Panc1 (cell line): ENCODE measurements at regions of chr5 and their contacts with region 1.

Region 1: GRCh38 chr5:142324871-142325724 is at the start of gene SPRY4:
- DNase-seq: peak; percentile 96
- ATAC-seq: peak; percentile 64
- H3K4me3 ChIP-seq: peak within 1 kb of the TSS; percentile 83 to 96
- H3K27ac ChIP-seq: peak within 1 kb of the TSS; percentile 97
- H3K4me1 ChIP-seq: peaks cover 44% of the 10 kb centered on the region
- H3K27me3 ChIP-seq: no peaks in the 10 kb centered on the region
- CTCF ChIP-seq: peak; percentile 28; the same call in 1 of the 2 replicates
- total RNA-seq, gene SPRY4: 35.6 TPM

Region 2: DNA sequence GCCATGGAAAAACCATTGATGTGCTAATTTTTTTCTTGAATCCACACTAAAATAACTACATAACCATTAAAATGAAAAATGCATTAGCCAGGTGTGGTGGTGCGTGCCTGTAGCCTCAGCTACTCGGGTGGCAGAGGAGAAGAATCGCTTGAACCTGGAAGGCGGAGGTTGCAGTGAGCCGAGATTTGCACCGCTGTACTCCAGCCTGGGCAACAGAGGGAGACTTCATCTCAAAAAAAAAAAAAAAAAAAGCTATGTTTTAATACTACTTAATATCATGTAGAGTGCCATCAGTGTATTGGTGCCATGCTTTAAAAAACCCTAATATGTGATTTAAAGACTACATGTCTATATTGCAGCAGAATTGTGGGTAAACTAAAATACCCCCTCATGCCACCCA is 157.6 kb before region 1 on chr5:
- CTCF ChIA-PET with region 1: no interaction called
- POLR2A ChIA-PET with region 1: no interaction called
- in situ Hi-C with region 1: no loop called
- intact Hi-C with region 1: loop called (anchors 5 kb)
- DNase-seq: no peak
- ATAC-seq: 0 out of 2 replicates have a peak, but pooled peaks have one; percentile 42
- H3K4me3 ChIP-seq: no peak overlapping the region
- H3K27ac ChIP-seq: no peak overlapping the region
- H3K4me1 ChIP-seq: no peaks in the 10 kb centered on the region
- H3K27me3 ChIP-seq: no peaks in the 10 kb centered on the region
- CTCF ChIP-seq: peak; percentile 62

Region 3: GRCh38 chr5:142263346-142263745 is 61.8 kb before region 1 on chr5:
- CTCF ChIA-PET with region 1: no interaction called
- POLR2A ChIA-PET with region 1: interaction called, 12 read pairs
- in situ Hi-C with region 1: no loop called
- intact Hi-C with region 1: no loop called
- DNase-seq: no peak
- ATAC-seq: no peak
- H3K4me3 ChIP-seq: no peak overlapping the region
- H3K27ac ChIP-seq: no peak overlapping the region
- H3K4me1 ChIP-seq: no peaks in the 10 kb centered on the region
- H3K27me3 ChIP-seq: no peaks in the 10 kb centered on the region
- CTCF ChIP-seq: no peak

Region 4: DNA sequence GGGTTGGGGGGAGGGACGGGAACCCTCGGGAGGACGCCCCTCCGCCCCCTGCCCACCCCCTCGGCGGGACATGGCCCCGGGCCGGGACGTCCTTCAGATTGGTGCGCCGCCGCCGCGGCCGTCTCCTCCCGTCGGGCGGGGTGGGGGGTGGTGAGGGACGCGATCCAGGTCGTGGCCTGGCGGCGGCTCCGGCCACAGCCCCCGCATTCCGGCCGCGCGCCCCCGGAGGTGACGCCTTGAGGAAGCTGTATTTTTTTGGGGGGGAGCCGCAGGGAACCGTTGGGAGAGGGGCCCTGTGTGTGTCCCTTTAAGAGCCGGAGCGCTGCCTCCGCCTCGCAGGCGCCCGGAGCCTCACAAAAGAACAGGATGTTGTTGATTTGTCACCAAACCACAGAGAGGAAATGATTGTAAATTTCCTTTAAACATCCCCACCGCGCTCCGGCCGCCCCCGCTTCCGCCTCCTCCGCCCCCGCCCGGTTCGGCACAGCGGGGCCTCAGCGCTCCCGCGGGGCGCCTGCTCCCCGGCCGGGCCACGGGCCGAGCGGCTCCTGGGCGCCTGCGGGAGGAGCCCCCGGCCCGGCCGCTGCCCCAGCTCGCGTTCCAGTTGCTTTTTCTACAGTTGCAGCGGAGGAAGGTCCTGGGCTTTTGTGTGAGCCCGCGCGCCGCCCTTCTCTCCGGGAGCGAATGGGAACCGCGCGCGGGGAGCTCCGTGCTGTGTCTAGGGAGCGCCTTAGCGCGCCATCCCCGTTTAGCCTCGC is 31.8 kb after region 1 on chr5:
- CTCF ChIA-PET with region 1: interaction called, 3 read pairs
- POLR2A ChIA-PET with region 1: interaction called, 6 read pairs
- in situ Hi-C with region 1: no loop called
- intact Hi-C with region 1: loop called (anchors 2 kb)
- DNase-seq: peak; percentile 67
- ATAC-seq: peak; percentile 84
- H3K4me3 ChIP-seq: peak overlapping the region; percentile 55 to 72
- H3K27ac ChIP-seq: peak overlapping the region; percentile 99
- H3K4me1 ChIP-seq: peaks cover 75% of the 10 kb centered on the region
- H3K27me3 ChIP-seq: no peaks in the 10 kb centered on the region
- CTCF ChIP-seq: no peak

Region 5: GRCh38 chr5:142807372-142807911 is 482.3 kb after region 1 on chr5:
- CTCF ChIA-PET with region 1: no interaction called
- POLR2A ChIA-PET with region 1: no interaction called
- in situ Hi-C with region 1: no loop called
- intact Hi-C with region 1: no loop called
- DNase-seq: no peak
- ATAC-seq: peak; percentile 47
- H3K4me3 ChIP-seq: no peak overlapping the region
- H3K27ac ChIP-seq: peak overlapping the region; percentile 82
- H3K4me1 ChIP-seq: peaks cover 68% of the 10 kb centered on the region
- H3K27me3 ChIP-seq: no peaks in the 10 kb centered on the region
- CTCF ChIP-seq: no peak

Region 6: DNA sequence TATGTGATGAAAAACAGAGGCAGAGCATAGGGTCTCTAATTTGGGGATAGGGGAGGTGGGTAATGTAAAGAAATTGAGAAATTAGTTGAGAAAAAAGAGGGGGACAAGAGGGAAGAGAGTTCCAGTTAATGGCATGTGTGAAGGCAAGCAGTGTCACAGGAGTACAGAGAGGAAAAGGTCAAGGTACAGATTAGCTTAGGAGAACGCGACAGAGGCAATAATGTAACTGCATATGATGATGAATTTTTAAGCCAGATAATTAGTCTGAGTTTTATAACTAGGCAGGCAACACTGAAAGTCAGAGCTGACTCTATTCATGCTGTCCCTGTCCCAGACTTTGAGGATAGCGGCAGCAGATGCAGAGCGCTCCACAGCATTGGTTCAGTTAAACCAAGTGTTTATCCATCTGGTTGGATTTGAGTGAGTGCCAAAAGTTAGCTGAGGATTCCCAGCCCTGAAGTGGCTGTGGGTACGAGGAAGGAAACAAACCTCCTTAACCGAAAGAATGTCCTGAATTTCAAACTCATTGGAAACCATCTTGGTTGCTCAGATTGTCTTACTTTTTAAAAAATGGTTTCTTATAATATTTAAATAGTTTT is 760.3 kb after region 1 on chr5:
- CTCF ChIA-PET with region 1: no interaction called
- POLR2A ChIA-PET with region 1: interaction called, 10 read pairs
- in situ Hi-C with region 1: no loop called
- intact Hi-C with region 1: no loop called
- DNase-seq: no peak
- ATAC-seq: no peak
- H3K4me3 ChIP-seq: no peak overlapping the region
- H3K27ac ChIP-seq: peak overlapping the region; percentile 84
- H3K4me1 ChIP-seq: peaks cover 28% of the 10 kb centered on the region
- H3K27me3 ChIP-seq: no peaks in the 10 kb centered on the region
- CTCF ChIP-seq: no peak